Spleen (tissue), 13 donors: ENCODE measurements at regions of chr6 and their contacts with region 1.

Region 1: DNA sequence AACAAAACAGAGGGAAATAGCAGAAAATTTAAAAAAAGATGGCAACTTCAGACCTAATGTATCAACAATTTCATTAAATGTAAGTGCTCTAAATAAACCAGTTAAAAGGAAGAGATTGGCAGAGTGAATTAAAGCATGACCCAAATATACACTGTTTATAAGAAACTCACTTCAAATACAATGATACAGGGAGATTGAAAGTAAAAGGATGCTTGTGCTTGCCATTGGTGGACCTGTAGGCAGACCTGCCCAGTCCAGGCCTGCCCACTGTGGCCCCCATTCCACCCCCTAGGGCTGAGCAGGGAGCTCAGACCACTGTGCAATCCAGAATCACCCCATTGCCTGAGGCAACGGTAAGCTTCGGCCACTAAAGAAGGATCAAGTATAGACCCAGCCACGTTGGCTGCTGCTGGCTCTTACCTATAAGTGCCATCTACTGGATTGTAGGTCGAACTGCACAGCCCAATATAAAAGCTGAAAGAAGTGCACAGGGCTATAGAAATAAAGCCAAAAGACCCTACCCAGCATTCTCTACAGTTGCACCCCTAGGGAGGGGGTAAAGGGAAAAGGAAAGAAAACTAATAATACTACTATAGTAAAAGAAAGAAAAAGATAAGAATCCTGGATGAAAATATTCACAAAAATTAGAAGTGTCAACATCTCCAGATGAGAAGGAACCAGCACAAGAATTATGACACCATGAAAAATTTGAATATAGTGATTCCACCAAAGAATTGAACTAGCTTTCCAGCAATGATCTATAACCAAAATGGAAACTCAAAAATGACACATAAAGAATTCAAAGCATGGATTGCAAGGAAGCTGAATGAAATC is 36.1 kb downstream of the PSMB1 start:
- DNase-seq: no peak
- H3K4me3 ChIP-seq: no peak overlapping the region
- H3K27ac ChIP-seq: no peak overlapping the region
- H3K4me1 ChIP-seq: peaks cover 0 to 5% (median 1%) of the 10 kb centered on the region in 6 donors
- H3K27me3 ChIP-seq: peaks cover 0 to 15% (median 0%) of the 10 kb centered on the region in 7 donors
- CTCF ChIP-seq: peak; percentile 56 to 85 (median 75)
- POLR2A ChIP-seq: no peak

Region 2: GRCh38 chr6:168956884-168957730 is 1559.9 kb before region 1 on chr6:
- intact Hi-C with region 1: loop called (anchors 10 kb)
- DNase-seq: peak; percentile 82
- H3K4me3 ChIP-seq: no peak overlapping the region
- H3K27ac ChIP-seq: no peak overlapping the region
- H3K4me1 ChIP-seq: no peaks in the 10 kb centered on the region
- H3K27me3 ChIP-seq: peaks cover 0 to 2% (median 0%) of the 10 kb centered on the region in 7 donors
- CTCF ChIP-seq: peak in 10 of 11 experiments; percentile 44 to 85 (median 69)
- POLR2A ChIP-seq: no peak

Region 3: DNA sequence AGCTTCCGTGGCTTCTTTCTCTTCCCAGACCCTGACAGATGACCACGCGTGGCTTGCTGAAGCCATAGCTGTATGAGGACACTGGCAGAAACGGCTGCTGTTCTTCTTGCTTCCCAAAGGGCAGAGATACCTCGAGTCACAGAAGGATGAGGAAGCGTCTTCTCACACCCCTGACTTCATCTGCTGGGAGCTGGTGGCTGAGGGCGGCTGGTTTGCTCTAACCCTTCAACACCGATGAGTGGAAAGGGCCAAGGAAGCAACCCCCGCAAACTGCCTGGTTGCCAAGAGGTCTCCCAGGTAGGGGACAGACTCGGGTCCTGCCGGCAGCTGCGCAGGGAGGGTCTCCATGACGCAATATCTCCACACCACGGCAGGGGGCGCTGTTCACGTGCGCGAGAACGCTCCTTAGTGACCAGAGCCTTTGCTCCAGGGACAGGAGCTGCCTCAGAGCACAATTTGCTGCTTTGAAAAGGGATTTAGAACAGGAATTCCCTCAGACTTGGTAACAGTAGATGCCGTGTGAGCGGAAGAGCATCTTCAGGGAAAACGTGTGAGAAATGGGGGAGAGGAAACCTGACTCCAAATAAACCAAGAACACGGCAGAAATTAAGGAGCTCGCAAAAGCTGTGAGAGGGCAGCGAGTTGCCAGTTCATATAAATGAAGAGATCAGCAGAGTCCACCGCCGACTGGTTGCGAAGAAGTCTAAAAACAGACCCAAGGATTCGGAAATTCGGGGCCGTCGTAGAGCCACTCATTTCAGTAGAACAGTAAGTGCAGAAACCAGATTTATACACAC is 685.4 kb before region 1 on chr6:
- intact Hi-C with region 1: loop called (anchors 5 kb)
- DNase-seq: peak; percentile 92
- H3K4me3 ChIP-seq: no peak overlapping the region
- H3K27ac ChIP-seq: no peak overlapping the region
- H3K4me1 ChIP-seq: peaks cover 0 to 16% (median 10%) of the 10 kb centered on the region in 6 donors
- H3K27me3 ChIP-seq: peaks cover 0 to 63% (median 21%) of the 10 kb centered on the region in 7 donors
- CTCF ChIP-seq: peak; percentile 84 to 93 (median 89)
- POLR2A ChIP-seq: no peak

Region 4: GRCh38 chr6:169933839-169934698 is 582.9 kb before region 1 on chr6:
- intact Hi-C with region 1: loop called (anchors 10 kb)
- DNase-seq: no peak
- H3K4me3 ChIP-seq: no peak overlapping the region
- H3K27ac ChIP-seq: no peak overlapping the region
- H3K4me1 ChIP-seq: no peaks in the 10 kb centered on the region
- H3K27me3 ChIP-seq: peaks cover 0 to 64% (median 0%) of the 10 kb centered on the region in 7 donors
- CTCF ChIP-seq: no peak
- POLR2A ChIP-seq: no peak

Region 5: GRCh38 chr6:170464524-170464979 is 52.4 kb before region 1 on chr6:
- intact Hi-C with region 1: no loop called
- DNase-seq: peak; percentile 47
- H3K4me3 ChIP-seq: no peak overlapping the region
- H3K27ac ChIP-seq: peak overlapping the region in 1 of 8 donors; percentile 33
- H3K4me1 ChIP-seq: peaks cover 7 to 13% (median 11%) of the 10 kb centered on the region in 6 donors
- H3K27me3 ChIP-seq: peaks cover 0 to 20% (median 0%) of the 10 kb centered on the region in 7 donors
- CTCF ChIP-seq: no peak
- POLR2A ChIP-seq: no peak

Region 6: DNA sequence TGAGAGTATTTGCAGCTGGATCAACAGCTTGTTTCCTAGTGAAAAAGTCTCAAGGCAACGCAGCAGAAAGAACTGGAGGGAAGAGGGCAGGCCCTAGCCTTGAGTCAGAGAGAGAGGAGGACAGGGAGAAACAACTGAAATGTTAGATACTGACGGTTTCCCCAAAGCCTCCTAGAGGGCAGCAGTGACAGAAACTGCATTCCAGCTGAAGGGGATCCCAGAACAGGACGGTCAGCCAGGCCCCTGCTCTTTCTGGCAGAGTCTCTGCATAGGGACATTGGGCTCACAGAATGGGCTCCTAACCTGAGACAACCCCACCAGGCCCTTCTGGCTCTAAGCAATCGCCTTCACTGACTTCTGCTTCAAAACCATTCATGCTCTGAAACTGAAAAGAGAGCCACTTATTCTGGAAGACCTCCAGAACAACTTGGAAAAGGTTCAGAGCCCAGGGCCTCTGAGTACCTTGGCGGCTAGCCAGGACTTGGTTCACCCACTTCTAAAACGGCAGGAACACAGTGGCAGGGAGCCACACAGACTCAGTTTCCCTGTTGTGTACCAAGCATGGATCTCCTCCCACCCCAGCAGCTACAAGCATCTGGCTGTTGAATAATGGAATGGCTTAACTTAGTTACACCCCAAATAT is 36.8 kb before region 1 on chr6:
- intact Hi-C with region 1: no loop called
- DNase-seq: no peak
- H3K4me3 ChIP-seq: no peak overlapping the region
- H3K27ac ChIP-seq: no peak overlapping the region
- H3K4me1 ChIP-seq: no peaks in the 10 kb centered on the region
- H3K27me3 ChIP-seq: no peaks in the 10 kb centered on the region
- CTCF ChIP-seq: peak in 1 of 11 experiments; percentile 11
- POLR2A ChIP-seq: no peak

Region 7: GRCh38 chr6:170605574-170606259 is 88.7 kb after region 1 on chr6:
- intact Hi-C with region 1: no loop called
- DNase-seq: no peak
- H3K4me3 ChIP-seq: no peak overlapping the region
- H3K27ac ChIP-seq: no peak overlapping the region
- H3K4me1 ChIP-seq: no peaks in the 10 kb centered on the region
- H3K27me3 ChIP-seq: peaks cover 0 to 73% (median 3%) of the 10 kb centered on the region in 7 donors
- CTCF ChIP-seq: no peak
- POLR2A ChIP-seq: no peak